Mammary epithelial cell (primary cell): ENCODE measurements at regions of chr1 and their contacts with region 1.

Region 1: GRCh38 chr1:89953072-89953626 is 41.8 kb upstream of the ZNF326 start:
- DNase-seq: peak; percentile 95
- H3K4me3 ChIP-seq: no peak overlapping the region
- H3K27ac ChIP-seq: peak overlapping the region; percentile 85
- H3K4me1 ChIP-seq: peaks cover 25% of the 10 kb centered on the region
- H3K27me3 ChIP-seq: no peaks in the 10 kb centered on the region
- CTCF ChIP-seq: no peak

Region 2: GRCh38 chr1:89358287-89358893 is 594.8 kb before region 1 on chr1:
- CTCF ChIA-PET with region 1: no interaction called
- dilution Hi-C with region 1: no loop called
- in situ Hi-C with region 1: no loop called
- intact Hi-C with region 1: no loop called
- DNase-seq: peak; percentile 60
- H3K4me3 ChIP-seq: no peak overlapping the region
- H3K27ac ChIP-seq: no peak overlapping the region
- H3K4me1 ChIP-seq: peaks cover 9% of the 10 kb centered on the region
- H3K27me3 ChIP-seq: no peaks in the 10 kb centered on the region
- CTCF ChIP-seq: peak; percentile 59 to 86

Region 3: GRCh38 chr1:89692601-89693521 is 260.3 kb before region 1 on chr1:
- CTCF ChIA-PET with region 1: no interaction called
- dilution Hi-C with region 1: no loop called
- in situ Hi-C with region 1: no loop called
- intact Hi-C with region 1: no loop called
- DNase-seq: no peak
- H3K4me3 ChIP-seq: no peak overlapping the region
- H3K27ac ChIP-seq: no peak overlapping the region
- H3K4me1 ChIP-seq: no peaks in the 10 kb centered on the region
- H3K27me3 ChIP-seq: no peaks in the 10 kb centered on the region
- CTCF ChIP-seq: no peak

Region 4: GRCh38 chr1:89804642-89805237 is 148.4 kb before region 1 on chr1:
- CTCF ChIA-PET with region 1: no interaction called
- dilution Hi-C with region 1: no loop called
- in situ Hi-C with region 1: no loop called
- intact Hi-C with region 1: loop called (anchors 1 kb)
- DNase-seq: peak; percentile 64
- H3K4me3 ChIP-seq: no peak overlapping the region
- H3K27ac ChIP-seq: no peak overlapping the region
- H3K4me1 ChIP-seq: peaks cover 19% of the 10 kb centered on the region
- H3K27me3 ChIP-seq: no peaks in the 10 kb centered on the region
- CTCF ChIP-seq: peak; percentile 93 to 95

Region 5: GRCh38 chr1:89820422-89821321 is 132.5 kb before region 1 on chr1 and contains the start of gene LRRC8D:
- CTCF ChIA-PET with region 1: no interaction called
- dilution Hi-C with region 1: no loop called
- in situ Hi-C with region 1: no loop called
- intact Hi-C with region 1: loop called (anchors 5 kb)
- DNase-seq: peak; percentile 74
- H3K4me3 ChIP-seq: peak within 1 kb of the TSS; percentile 56 to 73 (median 65)
- H3K27ac ChIP-seq: no peak within 1 kb of the TSS
- H3K4me1 ChIP-seq: peaks cover 15% of the 10 kb centered on the region
- H3K27me3 ChIP-seq: no peaks in the 10 kb centered on the region
- CTCF ChIP-seq: no peak
- total RNA-seq, gene LRRC8D: 39.5 to 47.7 TPM

Region 6: DNA sequence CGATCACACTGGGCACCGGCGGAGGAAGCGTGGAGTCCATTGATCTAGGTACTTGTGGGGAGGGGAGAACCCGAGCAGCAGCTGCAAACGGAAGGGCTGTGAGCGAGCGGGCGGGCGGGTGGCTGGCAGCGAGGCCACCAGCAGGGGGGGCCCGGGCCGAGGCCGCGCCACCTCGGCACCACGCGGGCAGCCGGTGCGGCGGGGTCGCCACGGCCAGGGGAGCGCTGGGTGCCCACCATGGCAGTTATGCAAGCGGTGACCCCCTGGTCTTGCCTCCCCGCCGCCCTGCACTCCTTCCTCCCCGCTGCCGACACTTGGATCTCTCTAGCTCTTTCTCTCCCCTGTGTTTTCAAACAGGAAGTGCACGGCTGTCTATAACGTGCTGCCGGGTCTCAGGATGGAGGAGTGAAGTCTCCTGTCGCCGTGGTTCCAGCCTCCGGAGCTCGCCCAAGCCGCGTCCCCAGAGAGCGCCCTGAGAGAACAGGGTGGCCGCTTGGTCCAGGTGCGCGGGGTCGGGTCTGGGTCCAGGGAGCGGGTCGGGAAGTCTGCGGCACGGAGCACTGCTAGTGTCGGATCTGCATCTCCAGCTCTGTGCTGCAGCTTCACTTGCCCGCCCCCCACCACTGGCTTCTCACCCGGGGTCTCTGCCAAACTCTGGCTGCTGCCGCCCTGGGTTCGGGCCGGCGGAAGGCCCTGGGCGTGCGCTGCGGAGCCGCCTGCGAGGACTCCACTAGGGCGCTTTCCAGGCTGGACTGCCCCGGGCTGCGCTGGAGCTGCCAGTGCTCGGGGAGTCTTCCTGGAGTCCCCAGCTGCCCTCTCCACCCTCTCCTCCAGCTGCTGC is 109.6 kb before region 1 on chr1:
- CTCF ChIA-PET with region 1: no interaction called
- dilution Hi-C with region 1: no loop called
- in situ Hi-C with region 1: loop called in 1 of 2 experiments (anchors 10 kb)
- intact Hi-C with region 1: no loop called
- DNase-seq: peak; percentile 63
- H3K4me3 ChIP-seq: peak overlapping the region; percentile 48 to 88 (median 72)
- H3K27ac ChIP-seq: peak overlapping the region; percentile 54
- H3K4me1 ChIP-seq: peaks cover 16% of the 10 kb centered on the region
- H3K27me3 ChIP-seq: no peaks in the 10 kb centered on the region
- CTCF ChIP-seq: peak; percentile 32 to 53

Region 7: GRCh38 chr1:89863165-89863830 is 89.9 kb before region 1 on chr1:
- CTCF ChIA-PET with region 1: no interaction called
- dilution Hi-C with region 1: loop called (anchors 5 kb)
- in situ Hi-C with region 1: no loop called
- intact Hi-C with region 1: no loop called
- DNase-seq: no peak
- H3K4me3 ChIP-seq: no peak overlapping the region
- H3K27ac ChIP-seq: no peak overlapping the region
- H3K4me1 ChIP-seq: peaks cover 13% of the 10 kb centered on the region
- H3K27me3 ChIP-seq: no peaks in the 10 kb centered on the region
- CTCF ChIP-seq: no peak

Region 8: DNA sequence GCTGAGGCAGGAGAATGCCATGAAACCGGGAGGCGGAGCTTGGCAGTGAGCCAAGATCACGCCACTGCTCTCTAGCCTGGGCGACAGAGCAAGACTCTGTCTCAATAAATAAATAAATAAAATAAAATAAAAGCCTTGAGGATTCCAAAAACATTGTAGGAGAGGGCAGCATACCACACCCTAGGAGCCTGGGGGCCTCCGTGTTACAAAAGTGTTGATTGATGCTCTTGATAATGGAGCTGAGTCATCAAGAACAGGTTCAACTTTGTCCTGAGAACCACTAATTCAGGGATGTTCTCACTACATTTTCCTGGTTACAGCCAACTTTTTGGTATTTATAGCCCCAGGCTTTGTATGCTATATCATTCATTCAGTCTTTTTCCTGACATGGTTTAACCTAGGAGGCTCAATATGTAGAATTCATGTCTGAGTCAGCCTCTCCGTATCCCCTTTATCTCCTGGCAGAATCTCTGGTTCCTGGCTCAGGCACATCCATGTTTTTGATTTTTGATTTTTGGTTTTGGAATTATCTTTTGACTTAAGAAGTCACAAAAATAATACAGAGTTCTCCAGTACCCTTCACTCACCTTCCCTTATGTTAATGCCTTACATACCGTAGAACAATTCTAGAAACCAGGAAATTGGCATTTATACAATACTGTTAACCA is 62.9 kb before region 1 on chr1:
- CTCF ChIA-PET with region 1: no interaction called
- dilution Hi-C with region 1: no loop called
- in situ Hi-C with region 1: no loop called
- intact Hi-C with region 1: loop called (anchors 2 kb)
- DNase-seq: peak; percentile 97
- H3K4me3 ChIP-seq: peak overlapping the region in 1 of 3 experiments; percentile 30
- H3K27ac ChIP-seq: peak overlapping the region; percentile 93
- H3K4me1 ChIP-seq: peaks cover 45% of the 10 kb centered on the region
- H3K27me3 ChIP-seq: no peaks in the 10 kb centered on the region
- CTCF ChIP-seq: no peak

Region 9: GRCh38 chr1:89938171-89939055 is 14.7 kb before region 1 on chr1:
- CTCF ChIA-PET with region 1: no interaction called
- dilution Hi-C with region 1: no loop called
- in situ Hi-C with region 1: no loop called
- intact Hi-C with region 1: no loop called
- DNase-seq: no peak
- H3K4me3 ChIP-seq: no peak overlapping the region
- H3K27ac ChIP-seq: no peak overlapping the region
- H3K4me1 ChIP-seq: no peaks in the 10 kb centered on the region
- H3K27me3 ChIP-seq: no peaks in the 10 kb centered on the region
- CTCF ChIP-seq: no peak

Region 10: GRCh38 chr1:90325168-90325567 is 372.0 kb after region 1 on chr1:
- CTCF ChIA-PET with region 1: no interaction called
- dilution Hi-C with region 1: no loop called
- in situ Hi-C with region 1: no loop called
- intact Hi-C with region 1: no loop called
- DNase-seq: no peak
- H3K4me3 ChIP-seq: no peak overlapping the region
- H3K27ac ChIP-seq: no peak overlapping the region
- H3K4me1 ChIP-seq: peaks cover 2% of the 10 kb centered on the region
- H3K27me3 ChIP-seq: no peaks in the 10 kb centered on the region
- CTCF ChIP-seq: no peak